ENCODE measurements at regions of chr19 and their contacts with region 1.

Region 1: GRCh38 chr19:44500148-44500956 is at the start of gene ZNF180:
- DNase-seq: peak; percentile 96
- H3K4me3 ChIP-seq: peak within 1 kb of the TSS; percentile 75 to 88 (median 77)
- H3K27ac ChIP-seq: peak within 1 kb of the TSS; percentile 59
- H3K4me1 ChIP-seq: peaks cover 11% of the 10 kb centered on the region
- H3K27me3 ChIP-seq: peaks cover 0 to 2% of the 10 kb centered on the region in 2 experiments
- CTCF ChIP-seq: peak; percentile 14 to 53
- POLR2A ChIP-seq: peak; percentile 77
- total RNA-seq, gene ZNF180: 8.6 and 8.9 TPM in 2 replicates

Region 2: DNA sequence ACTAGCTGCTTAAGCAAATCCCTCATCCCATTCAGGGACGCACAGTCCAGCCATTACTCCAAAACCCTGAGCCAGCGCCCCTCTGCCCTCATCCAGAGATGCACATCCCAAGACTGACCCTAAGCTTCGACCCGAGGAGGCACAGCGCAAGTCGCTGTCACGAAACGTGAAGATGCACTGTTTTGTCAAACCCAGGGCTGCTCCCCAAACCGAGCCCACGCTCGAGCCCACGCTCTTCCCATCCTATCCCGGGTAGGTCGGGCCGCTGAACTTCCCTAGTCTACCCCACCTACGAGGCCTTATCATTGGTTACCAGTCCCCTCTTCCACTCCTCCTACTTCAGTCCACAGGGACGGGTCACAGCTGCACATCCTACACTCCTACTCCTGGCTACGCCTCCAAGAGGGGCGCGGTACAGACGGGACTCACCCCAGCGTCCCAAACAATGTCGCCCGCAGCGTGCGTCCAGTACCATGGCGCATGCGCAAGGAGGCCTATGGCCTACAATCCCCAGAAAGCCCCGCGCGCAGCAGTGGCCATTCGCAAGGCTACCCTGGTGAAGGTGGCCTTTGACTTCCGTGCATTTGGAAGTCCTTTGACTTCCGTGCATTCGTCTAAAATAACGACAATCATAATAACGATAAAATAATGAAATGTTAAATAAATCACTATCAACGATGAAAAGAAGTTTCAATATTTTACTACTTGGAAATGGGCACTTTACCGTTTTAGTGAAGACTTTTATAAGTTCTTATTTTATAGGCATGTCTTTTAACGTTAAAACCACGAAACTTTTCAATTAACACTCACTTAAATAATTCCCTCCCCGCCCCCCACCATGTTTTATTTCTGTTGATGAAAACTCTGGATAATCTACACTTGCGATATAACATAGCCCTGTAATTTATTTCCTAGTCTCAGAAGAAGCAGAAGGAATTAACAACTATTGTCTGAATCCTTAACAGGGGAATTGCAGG is 98.9 kb before region 1 on chr19 and contains the start of gene ZNF285:
- CTCF ChIA-PET with region 1: no interaction called
- POLR2A ChIA-PET with region 1: no interaction called
- dilution Hi-C with region 1: no loop called
- intact Hi-C with region 1: loop called (anchors 1 kb)
- DNase-seq: peak; percentile 98
- H3K4me3 ChIP-seq: peak within 1 kb of the TSS; percentile 46 to 66 (median 55)
- H3K27ac ChIP-seq: no peak within 1 kb of the TSS
- H3K4me1 ChIP-seq: no peaks in the 10 kb centered on the region
- H3K27me3 ChIP-seq: no peaks in the 10 kb centered on the region
- CTCF ChIP-seq: no peak
- POLR2A ChIP-seq: peak; percentile 19
- total RNA-seq, gene ZNF285: 3.6 and 4.6 TPM in 2 replicates

Region 3: GRCh38 chr19:44447916-44448674 is 52.3 kb before region 1 on chr19 and contains the start of gene ZNF229:
- CTCF ChIA-PET with region 1: no interaction called
- POLR2A ChIA-PET with region 1: no interaction called
- dilution Hi-C with region 1: no loop called
- intact Hi-C with region 1: loop called (anchors 1 kb)
- DNase-seq: peak; percentile 90
- H3K4me3 ChIP-seq: peak within 1 kb of the TSS; percentile 18 to 56 (median 49)
- H3K27ac ChIP-seq: no peak within 1 kb of the TSS
- H3K4me1 ChIP-seq: peaks cover 6% of the 10 kb centered on the region
- H3K27me3 ChIP-seq: no peaks in the 10 kb centered on the region
- CTCF ChIP-seq: no peak
- POLR2A ChIP-seq: no peak
- total RNA-seq, gene ZNF229: 6.0 and 8.8 TPM in 2 replicates

Measured in endothelial cell of umbilical vein (primary cell).